ENCODE measurements at regions of chr1 and their contacts with region 1.

Region 1: GRCh38 chr1:177933881-177934280 is 36.0 kb downstream of the SEC16B start:
- DNase-seq: no peak
- ATAC-seq: no peak
- H3K4me3 ChIP-seq: no peak overlapping the region
- H3K27ac ChIP-seq: no peak overlapping the region
- H3K4me1 ChIP-seq: no peaks in the 10 kb centered on the region
- H3K27me3 ChIP-seq: no peaks in the 10 kb centered on the region
- CTCF ChIP-seq: no peak

Region 2: DNA sequence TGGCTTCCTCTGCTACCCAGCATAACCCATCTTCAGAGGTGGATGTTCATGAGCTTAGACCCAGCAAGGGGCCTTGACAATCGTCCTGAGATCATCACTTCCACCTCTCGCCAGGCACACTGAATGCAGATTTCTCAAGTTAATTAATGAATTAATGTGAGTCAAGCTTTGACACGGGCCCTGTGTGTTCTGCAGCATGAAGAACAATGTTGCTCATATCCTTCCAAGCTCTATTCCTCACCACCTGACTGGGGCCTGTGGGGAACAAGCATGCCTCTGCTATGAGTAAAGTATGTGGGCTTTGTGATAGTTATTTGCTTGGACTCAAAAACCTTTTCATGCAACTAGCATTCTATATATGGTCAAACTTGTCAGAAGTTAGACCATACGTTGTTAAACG is 86.0 kb before region 1 on chr1:
- CTCF ChIA-PET with region 1: no interaction called
- POLR2A ChIA-PET with region 1: interaction called, 10 read pairs
- in situ Hi-C with region 1: no loop called
- intact Hi-C with region 1: no loop called
- DNase-seq: no peak
- ATAC-seq: no peak
- H3K4me3 ChIP-seq: no peak overlapping the region
- H3K27ac ChIP-seq: no peak overlapping the region
- H3K4me1 ChIP-seq: no peaks in the 10 kb centered on the region
- H3K27me3 ChIP-seq: peaks cover 14% of the 10 kb centered on the region
- CTCF ChIP-seq: no peak

Region 3: GRCh38 chr1:178031856-178032320 is 98.0 kb after region 1 on chr1:
- CTCF ChIA-PET with region 1: no interaction called
- POLR2A ChIA-PET with region 1: no interaction called
- in situ Hi-C with region 1: no loop called
- intact Hi-C with region 1: no loop called
- DNase-seq: no peak
- ATAC-seq: peak; percentile 96
- H3K4me3 ChIP-seq: no peak overlapping the region
- H3K27ac ChIP-seq: no peak overlapping the region
- H3K4me1 ChIP-seq: no peaks in the 10 kb centered on the region
- H3K27me3 ChIP-seq: no peaks in the 10 kb centered on the region
- CTCF ChIP-seq: peak; percentile 91

Measured in Panc1 (cell line).